Astrocyte of the cerebellum (primary cell): ENCODE measurements at regions of chr4 and their contacts with region 1.

Region 1: DNA sequence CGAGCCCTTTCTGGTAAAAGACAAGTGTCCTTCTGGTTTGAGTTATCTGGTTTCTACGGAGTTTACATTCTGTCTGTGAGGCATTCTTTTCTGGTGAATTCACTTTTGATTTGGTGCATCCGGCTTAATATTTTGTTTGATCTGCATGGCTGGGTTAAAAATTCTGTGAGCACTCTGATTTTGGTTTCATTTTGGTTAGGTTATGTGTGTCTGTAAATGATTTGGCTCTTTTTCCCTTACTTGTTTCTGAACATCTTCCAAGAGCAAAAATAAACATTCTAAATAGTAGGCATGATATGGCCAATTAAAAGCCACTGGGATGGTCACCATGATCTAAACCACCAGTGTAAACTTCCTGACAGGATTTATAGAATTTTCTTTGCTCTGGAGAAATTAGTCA is 85.7 kb upstream of the PTPN13 start:
- DNase-seq: peak; percentile 60
- H3K4me3 ChIP-seq: peak overlapping the region; percentile 1
- CTCF ChIP-seq: no peak

Region 2: DNA sequence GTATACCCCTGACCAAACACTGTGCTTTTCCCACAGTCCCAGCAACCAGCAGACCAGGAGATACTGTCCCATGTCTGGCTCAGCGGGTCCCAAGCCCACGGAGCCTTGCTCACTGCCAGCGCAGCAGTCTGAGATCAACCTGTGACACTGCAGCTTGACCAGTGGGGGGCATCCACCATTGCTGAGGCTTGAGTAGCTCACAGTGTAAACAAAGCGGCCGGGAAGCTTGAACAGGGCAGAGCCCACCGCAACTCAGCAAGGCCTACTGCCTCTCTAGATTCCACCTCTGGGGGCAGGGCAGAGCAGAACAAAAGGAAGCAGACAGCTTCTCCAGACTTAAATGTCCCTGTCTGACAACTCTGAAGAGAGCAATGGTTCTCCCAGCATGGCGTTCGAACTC is 282.7 kb after region 1 on chr4:
- in situ Hi-C with region 1: loop called (anchors 10 kb)
- DNase-seq: no peak
- H3K4me3 ChIP-seq: no peak overlapping the region
- CTCF ChIP-seq: no peak